Astrocyte of the cerebellum (primary cell): ENCODE measurements at regions of chr12 and their contacts with region 1.

Region 1: DNA sequence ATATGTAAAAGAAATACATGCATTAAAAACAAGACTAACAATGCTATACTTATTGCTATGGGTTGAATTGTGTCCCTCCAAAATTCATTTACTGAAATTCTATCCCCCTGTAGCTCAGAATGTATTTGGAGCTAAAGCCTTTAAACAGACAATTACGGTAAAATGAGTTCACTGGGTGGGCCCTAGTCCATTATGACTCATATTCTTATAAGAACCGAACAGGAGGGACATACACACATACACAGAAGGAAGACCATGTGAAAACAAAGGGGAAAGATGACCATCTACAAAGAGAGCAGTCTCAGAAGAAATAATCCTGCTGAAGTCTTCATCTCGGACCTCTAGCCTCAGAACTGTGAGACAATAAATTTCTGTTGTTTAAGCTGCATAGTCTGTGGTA is 77.1 kb upstream of the ANKS1B start:
- DNase-seq: no peak
- H3K4me3 ChIP-seq: no peak overlapping the region
- CTCF ChIP-seq: no peak

Region 2: GRCh38 chr12:100128512-100128908 is 66.7 kb after region 1 on chr12:
- in situ Hi-C with region 1: loop called (anchors 5 kb)
- DNase-seq: no peak
- H3K4me3 ChIP-seq: no peak overlapping the region
- CTCF ChIP-seq: peak; percentile 42

Region 3: DNA sequence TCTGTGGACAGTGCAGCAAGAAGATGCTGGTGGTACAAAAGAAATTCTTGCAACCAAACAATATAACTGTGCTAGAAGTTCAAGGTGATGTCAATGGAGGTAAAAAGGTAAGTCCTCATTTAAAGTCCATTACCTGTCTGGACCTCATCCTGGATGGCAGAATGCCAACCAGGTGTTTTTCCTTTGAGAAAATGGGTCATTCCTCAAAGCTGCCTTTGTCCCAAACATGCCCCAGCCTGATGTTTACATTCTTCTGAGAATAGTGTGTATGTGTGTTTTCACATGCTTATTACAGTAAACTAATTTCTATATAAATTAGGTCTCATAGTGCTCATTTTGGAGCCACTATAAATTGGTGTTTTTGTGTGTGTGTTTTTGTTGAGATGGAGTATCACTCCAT is 163.7 kb after region 1 on chr12:
- in situ Hi-C with region 1: no loop called
- DNase-seq: no peak
- H3K4me3 ChIP-seq: no peak overlapping the region
- CTCF ChIP-seq: no peak